Activated T-helper 2 cell treated with anti-CD3 and anti-CD28 coated beads, Interferon-gamma antibody, Interleukin-2, Interleukin-4, amounts not matched to agents 10 μg/mL and 5 μg/mL and 100 μg/mL, durations not matched to agents 14 hours and 24 hours and 36 hours (primary cell): ENCODE measurements at regions of chr4 and their contacts with region 1.

Region 1: GRCh38 chr4:38310446-38311043 is 350.3 kb downstream of the PTTG2 start:
- DNase-seq: peak; percentile 77
- H3K4me3 Mint-ChIP-seq: no peak overlapping the region
- H3K27ac Mint-ChIP-seq: peak overlapping the region; percentile 38
- H3K4me1 Mint-ChIP-seq: peaks cover 58% of the 10 kb centered on the region
- H3K27me3 Mint-ChIP-seq: peaks cover 36% of the 10 kb centered on the region

Region 2: DNA sequence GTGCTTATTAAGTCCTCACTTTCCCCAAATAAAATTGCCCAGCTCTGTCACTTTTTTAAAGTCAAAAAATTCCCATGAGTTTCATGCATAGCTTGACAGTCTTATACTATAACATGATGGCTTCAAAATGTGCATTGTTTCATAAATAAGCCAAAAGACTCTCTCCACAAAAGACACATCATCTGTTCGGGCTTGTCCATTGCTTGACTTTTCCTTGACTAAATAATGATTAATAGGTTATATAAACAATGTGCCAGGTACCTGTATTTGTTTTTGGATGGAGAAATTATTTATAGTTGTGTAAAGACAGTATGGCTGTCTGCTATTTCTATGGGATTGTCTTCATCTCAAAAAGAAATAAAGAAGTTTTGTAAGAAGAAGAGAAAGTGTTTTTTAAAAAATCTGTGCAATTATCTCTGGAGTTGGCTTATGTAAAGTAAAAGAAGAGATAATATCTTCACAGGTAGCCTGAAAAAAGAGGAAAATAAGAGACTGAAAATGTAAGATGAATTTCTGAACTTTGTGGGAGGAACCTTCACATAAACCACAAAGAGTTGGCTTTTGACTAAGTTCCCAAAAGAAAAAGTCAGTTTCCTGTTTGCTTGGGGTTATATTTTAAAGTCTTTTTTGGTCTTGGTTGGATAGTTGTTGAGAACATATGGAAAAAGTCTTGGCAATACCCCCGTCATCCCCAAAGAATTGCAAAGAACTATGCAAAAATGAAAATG is 24.4 kb after region 1 on chr4:
- intact Hi-C with region 1: loop called (anchors 1 kb)
- DNase-seq: no peak
- H3K4me3 Mint-ChIP-seq: no peak overlapping the region
- H3K27ac Mint-ChIP-seq: no peak overlapping the region
- H3K4me1 Mint-ChIP-seq: peaks cover 14% of the 10 kb centered on the region
- H3K27me3 Mint-ChIP-seq: peaks cover 42% of the 10 kb centered on the region

Region 3: DNA sequence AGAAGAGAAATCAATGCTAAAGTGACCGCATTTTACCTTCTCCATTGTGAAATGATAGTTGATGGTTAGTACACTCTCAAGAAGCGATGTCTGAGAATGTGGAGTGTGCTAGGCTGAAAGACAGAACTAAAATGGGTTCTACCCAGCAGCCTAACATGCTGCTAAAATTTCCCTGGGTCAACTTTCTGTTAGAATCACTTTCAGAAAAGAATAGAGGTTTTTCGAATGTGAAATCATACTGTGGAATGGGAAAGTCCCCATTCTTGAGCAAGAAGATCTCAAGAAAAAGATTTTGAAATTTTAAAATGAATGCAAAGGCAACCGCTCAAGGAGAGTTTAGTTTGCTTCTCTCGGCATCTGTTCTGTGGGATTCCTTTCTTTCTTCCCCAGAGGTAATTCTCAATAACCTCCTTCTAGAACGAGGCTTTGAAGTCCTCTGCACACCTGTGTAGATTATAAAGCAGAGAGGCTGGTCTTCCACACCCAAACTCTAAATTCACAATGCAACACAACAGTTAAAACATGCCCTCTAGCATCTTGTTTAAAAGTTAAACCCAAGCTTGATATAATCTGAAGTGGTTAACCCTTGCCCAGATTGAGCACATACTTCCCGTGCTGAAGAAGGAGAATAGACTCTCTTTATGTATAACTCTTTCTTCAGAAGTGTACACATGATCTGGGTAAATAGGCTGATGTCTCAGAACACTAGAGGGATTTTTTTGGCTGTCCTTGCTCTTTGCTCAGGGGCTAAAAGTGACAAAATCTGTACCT is 144.7 kb after region 1 on chr4:
- intact Hi-C with region 1: loop called (anchors 1 kb)
- DNase-seq: no peak
- H3K4me3 Mint-ChIP-seq: no peak overlapping the region
- H3K27ac Mint-ChIP-seq: peak overlapping the region; percentile 74
- H3K4me1 Mint-ChIP-seq: peaks cover 45% of the 10 kb centered on the region
- H3K27me3 Mint-ChIP-seq: peaks cover 12% of the 10 kb centered on the region

Region 4: DNA sequence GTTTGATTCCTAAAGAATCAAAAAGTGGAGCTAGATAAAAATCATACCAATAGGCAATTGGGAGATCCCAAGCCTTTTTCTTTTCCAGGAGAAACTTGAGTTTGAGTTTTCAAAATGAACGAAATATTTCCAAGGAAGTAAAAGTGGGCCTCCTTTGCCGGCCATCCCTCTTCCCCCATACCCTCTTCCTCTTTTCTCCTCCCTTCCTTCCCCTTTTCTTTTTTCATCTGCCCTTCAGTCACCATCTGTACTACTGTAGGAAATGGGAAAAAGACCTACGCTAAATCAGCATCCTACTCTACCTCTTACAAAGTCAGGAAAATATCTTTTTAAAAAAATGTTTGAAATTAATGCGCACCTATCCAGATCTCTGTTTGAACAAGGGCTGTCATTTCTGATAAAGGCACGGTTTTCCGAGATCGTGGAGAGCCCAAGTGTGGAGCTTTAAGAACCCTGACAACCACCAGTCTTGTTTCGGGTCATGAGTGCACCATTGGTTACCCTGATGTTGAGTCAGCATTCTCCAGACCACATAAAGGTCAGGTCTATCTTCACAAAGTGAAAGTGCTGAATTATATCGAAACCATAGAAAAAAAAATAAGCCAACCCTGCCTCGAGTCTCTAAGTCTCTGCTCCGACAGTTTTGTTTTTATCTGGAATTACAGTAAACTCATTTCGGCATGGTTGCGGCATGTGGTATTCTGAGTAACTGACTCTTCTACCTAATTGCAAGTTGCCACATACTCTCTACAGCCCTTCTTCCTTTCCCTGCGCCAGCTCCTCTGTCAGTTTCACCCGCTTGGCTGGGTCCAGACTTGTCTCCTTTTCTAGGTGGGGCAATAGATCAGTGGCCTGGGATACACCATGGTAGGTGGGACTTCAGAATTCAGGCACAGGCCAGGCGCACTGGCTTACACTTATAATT is 213.2 kb after region 1 on chr4:
- intact Hi-C with region 1: loop called (anchors 1 kb)
- DNase-seq: peak; percentile 54
- H3K4me3 Mint-ChIP-seq: no peak overlapping the region
- H3K27ac Mint-ChIP-seq: peak overlapping the region; percentile 57
- H3K4me1 Mint-ChIP-seq: peaks cover 11% of the 10 kb centered on the region
- H3K27me3 Mint-ChIP-seq: peaks cover 25% of the 10 kb centered on the region

Region 5: GRCh38 chr4:38730830-38731646 is 420.5 kb after region 1 on chr4:
- intact Hi-C with region 1: loop called (anchors 5 kb)
- DNase-seq: peak; percentile 64
- H3K4me3 Mint-ChIP-seq: no peak overlapping the region
- H3K27ac Mint-ChIP-seq: no peak overlapping the region
- H3K4me1 Mint-ChIP-seq: peaks cover 10% of the 10 kb centered on the region
- H3K27me3 Mint-ChIP-seq: peaks cover 21% of the 10 kb centered on the region